ENCODE measurements at regions of chr9 and their contacts with region 1.

Region 1: GRCh38 chr9:79673614-79674013 is 101.8 kb downstream of the TLE4 start:
- DNase-seq: no peak
- ATAC-seq: no peak
- H3K4me3 ChIP-seq: no peak overlapping the region
- H3K27ac ChIP-seq: no peak overlapping the region
- H3K4me1 ChIP-seq: no peaks in the 10 kb centered on the region
- H3K27me3 ChIP-seq: no peaks in the 10 kb centered on the region
- CTCF ChIP-seq: no peak
- EP300 ChIP-seq: no peak
- POLR2A ChIP-seq: no peak
- RAD21 ChIP-seq: no peak

Region 2: GRCh38 chr9:79571309-79572031 is 102.1 kb before region 1 on chr9 and contains the start of gene TLE4:
- CTCF ChIA-PET with region 1: no interaction called
- POLR2A ChIA-PET with region 1: no interaction called
- in situ Hi-C with region 1: no loop called
- intact Hi-C with region 1: loop called (anchors 5 kb)
- DNase-seq: peak; percentile 96
- ATAC-seq: peak; percentile 97
- H3K4me3 ChIP-seq: peak within 1 kb of the TSS; percentile 60 to 67 (median 61)
- H3K27ac ChIP-seq: peak within 1 kb of the TSS; percentile 29
- H3K4me1 ChIP-seq: peaks cover 5% of the 10 kb centered on the region; the same call in 1 of the 2 replicates
- H3K27me3 ChIP-seq: peaks cover 4 to 40% of the 10 kb centered on the region in 2 experiments; a peak in 4 of 5 replicates
- CTCF ChIP-seq: no peak
- EP300 ChIP-seq: no peak
- POLR2A ChIP-seq: peak; percentile 35 to 89; a peak in 3 of 4 replicates
- RAD21 ChIP-seq: no peak
- total RNA-seq, gene TLE4: 0.94 and 2.0 TPM in 2 replicates

Region 3: DNA sequence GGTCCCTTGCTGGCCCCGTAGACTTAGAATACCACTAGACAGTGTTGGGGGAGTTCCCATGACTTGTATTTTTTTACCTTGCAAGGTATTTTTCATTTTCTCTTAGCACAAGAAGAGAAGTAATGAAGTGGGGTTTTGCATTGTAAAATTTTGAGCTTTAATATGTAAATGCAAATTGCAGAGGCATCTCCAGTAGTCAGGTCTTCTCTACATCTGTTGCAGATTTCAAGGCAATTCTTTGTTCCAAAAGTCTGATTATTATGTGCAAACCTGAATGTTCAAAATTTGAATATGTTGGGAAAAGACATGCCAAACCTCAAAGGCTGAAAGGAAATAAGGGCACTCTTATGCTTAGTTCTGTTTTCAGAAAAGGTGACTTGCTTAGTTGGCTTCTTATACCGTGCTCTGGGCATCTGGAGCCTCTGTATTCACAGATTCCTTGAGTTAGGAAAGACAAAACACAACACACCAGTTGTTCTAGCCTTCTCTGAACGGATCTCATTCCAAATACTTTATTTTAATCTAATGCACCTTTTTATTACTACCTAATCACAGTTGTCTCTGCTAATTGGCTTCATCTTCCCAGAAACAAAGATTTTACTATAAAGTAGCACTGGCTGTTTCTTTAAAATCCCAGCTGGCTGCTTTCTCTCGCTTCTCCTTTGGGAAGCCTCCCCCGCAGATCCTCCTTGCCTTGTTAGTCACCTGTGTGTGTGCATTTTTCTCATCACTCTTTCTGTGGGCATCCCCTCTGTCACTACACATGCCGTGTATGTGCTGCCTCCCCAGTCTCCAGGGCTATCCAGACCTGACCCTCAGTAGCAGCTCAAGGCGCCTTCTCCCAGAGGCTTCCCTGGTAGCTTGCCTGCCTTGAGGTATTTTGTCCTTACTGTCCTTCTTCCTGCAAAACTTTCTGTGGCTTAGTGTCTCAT is 36.4 kb after region 1 on chr9:
- CTCF ChIA-PET with region 1: no interaction called
- POLR2A ChIA-PET with region 1: no interaction called
- in situ Hi-C with region 1: no loop called
- intact Hi-C with region 1: no loop called
- DNase-seq: no peak
- ATAC-seq: no peak
- H3K4me3 ChIP-seq: no peak overlapping the region
- H3K27ac ChIP-seq: no peak overlapping the region
- H3K4me1 ChIP-seq: no peaks in the 10 kb centered on the region
- H3K27me3 ChIP-seq: no peaks in the 10 kb centered on the region
- CTCF ChIP-seq: no peak
- EP300 ChIP-seq: no peak
- POLR2A ChIP-seq: no peak
- RAD21 ChIP-seq: no peak